Testis (tissue), 5 donors: ENCODE measurements at regions of chr3 and their contacts with region 1.

Region 1: GRCh38 chr3:124281453-124282316 is 289.8 kb upstream of the ROPN1 start:
- DNase-seq: peak; percentile 40
- H3K4me3 ChIP-seq: no peak overlapping the region
- H3K27ac ChIP-seq: peak overlapping the region in 1 of 2 donors; percentile 87
- H3K4me1 ChIP-seq: peaks cover 35% of the 10 kb centered on the region
- H3K27me3 ChIP-seq: no peaks in the 10 kb centered on the region
- CTCF ChIP-seq: peak; percentile 17 to 45 (median 38)
- POLR2A ChIP-seq: no peak

Region 2: GRCh38 chr3:124026516-124026915 is 255.2 kb before region 1 on chr3:
- intact Hi-C with region 1: loop called (anchors 10 kb)
- DNase-seq: no peak
- H3K4me3 ChIP-seq: no peak overlapping the region
- H3K27ac ChIP-seq: no peak overlapping the region
- H3K4me1 ChIP-seq: no peaks in the 10 kb centered on the region
- H3K27me3 ChIP-seq: no peaks in the 10 kb centered on the region
- CTCF ChIP-seq: no peak
- POLR2A ChIP-seq: no peak